ENCODE measurements at regions of chr4 and their contacts with region 1.

Region 1: GRCh38 chr4:54423066-54423465 is 194.0 kb downstream of the PDGFRA start:
- DNase-seq: no peak
- H3K4me3 ChIP-seq: no peak overlapping the region
- CTCF ChIP-seq: no peak

Region 2: GRCh38 chr4:54333657-54334056 is 89.4 kb before region 1 on chr4:
- in situ Hi-C with region 1: loop called (anchors 5 kb)
- DNase-seq: no peak
- H3K4me3 ChIP-seq: no peak overlapping the region
- CTCF ChIP-seq: no peak

Region 3: GRCh38 chr4:54473077-54473545 is 50.0 kb after region 1 on chr4:
- in situ Hi-C with region 1: loop called (anchors 5 kb)
- DNase-seq: no peak
- H3K4me3 ChIP-seq: no peak overlapping the region
- CTCF ChIP-seq: no peak

Region 4: GRCh38 chr4:54661686-54662085 is 238.6 kb after region 1 on chr4:
- in situ Hi-C with region 1: no loop called
- DNase-seq: peak; percentile 66
- H3K4me3 ChIP-seq: no peak overlapping the region
- CTCF ChIP-seq: no peak

Measured in astrocyte of the cerebellum (primary cell).